ENCODE measurements at regions of chr19 and their contacts with region 1.

Region 1: GRCh38 chr19:45469132-45469944 is 1.5 kb downstream of the FOSB start:
- DNase-seq: peak; percentile 98
- H3K4me3 Mint-ChIP-seq: peak overlapping the region; percentile 86
- H3K27ac Mint-ChIP-seq: peak overlapping the region; percentile 99
- H3K4me1 Mint-ChIP-seq: peaks cover 35% of the 10 kb centered on the region
- H3K27me3 Mint-ChIP-seq: peaks cover 23% of the 10 kb centered on the region
- CTCF ChIP-seq: no peak

Region 2: GRCh38 chr19:45391340-45391739 is 78.0 kb before region 1 on chr19:
- CTCF ChIA-PET with region 1: no interaction called
- intact Hi-C with region 1: no loop called
- DNase-seq: no peak
- H3K4me3 Mint-ChIP-seq: no peak overlapping the region
- H3K27ac Mint-ChIP-seq: peak overlapping the region; percentile 27
- H3K4me1 Mint-ChIP-seq: no peaks in the 10 kb centered on the region
- H3K27me3 Mint-ChIP-seq: no peaks in the 10 kb centered on the region
- CTCF ChIP-seq: no peak

Region 3: DNA sequence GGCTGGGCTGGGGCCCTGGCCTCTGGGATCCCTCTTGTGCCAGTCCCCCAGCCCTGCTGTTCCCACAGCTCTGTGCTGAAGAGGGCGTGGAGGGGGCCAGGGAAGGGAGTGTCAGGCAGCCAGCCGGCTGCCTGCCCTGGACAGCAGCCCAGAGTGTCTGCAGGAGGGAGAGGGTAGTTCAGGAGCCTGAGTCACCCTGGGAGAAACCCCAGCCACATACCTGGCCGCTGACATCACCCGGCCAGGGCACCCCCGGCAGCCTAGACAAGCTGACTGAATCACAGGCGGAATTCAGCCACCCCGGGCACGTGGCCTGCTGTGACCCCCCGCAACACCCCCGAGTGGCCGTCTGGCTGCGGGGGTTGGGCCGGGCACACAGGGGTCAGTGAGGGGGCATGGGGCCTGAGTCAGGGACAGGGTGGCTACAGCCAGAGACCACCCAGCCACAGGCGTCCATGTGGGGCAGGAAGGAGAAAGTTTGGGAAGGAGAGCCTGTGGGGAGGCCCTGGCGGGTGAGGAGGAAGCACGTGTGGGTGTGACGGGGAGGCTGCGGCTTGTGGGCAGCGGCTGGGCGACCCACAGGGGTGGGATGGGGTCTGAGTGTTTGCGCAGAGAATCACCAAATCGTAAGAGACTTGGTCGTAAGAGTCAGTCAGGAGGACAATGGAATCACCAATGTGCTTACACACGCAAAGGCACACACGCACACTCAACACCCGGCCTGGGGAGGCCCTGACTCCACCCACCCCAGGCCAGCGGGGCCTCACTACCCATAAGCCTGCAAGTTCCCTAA is 13.4 kb before region 1 on chr19:
- CTCF ChIA-PET with region 1: interaction called, 13 read pairs
- intact Hi-C with region 1: loop called (anchors 2 kb)
- DNase-seq: peak; percentile 99
- H3K4me3 Mint-ChIP-seq: peak overlapping the region; percentile 70
- H3K27ac Mint-ChIP-seq: peak overlapping the region; percentile 93
- H3K4me1 Mint-ChIP-seq: peaks cover 68% of the 10 kb centered on the region
- H3K27me3 Mint-ChIP-seq: no peaks in the 10 kb centered on the region
- CTCF ChIP-seq: no peak

Region 4: DNA sequence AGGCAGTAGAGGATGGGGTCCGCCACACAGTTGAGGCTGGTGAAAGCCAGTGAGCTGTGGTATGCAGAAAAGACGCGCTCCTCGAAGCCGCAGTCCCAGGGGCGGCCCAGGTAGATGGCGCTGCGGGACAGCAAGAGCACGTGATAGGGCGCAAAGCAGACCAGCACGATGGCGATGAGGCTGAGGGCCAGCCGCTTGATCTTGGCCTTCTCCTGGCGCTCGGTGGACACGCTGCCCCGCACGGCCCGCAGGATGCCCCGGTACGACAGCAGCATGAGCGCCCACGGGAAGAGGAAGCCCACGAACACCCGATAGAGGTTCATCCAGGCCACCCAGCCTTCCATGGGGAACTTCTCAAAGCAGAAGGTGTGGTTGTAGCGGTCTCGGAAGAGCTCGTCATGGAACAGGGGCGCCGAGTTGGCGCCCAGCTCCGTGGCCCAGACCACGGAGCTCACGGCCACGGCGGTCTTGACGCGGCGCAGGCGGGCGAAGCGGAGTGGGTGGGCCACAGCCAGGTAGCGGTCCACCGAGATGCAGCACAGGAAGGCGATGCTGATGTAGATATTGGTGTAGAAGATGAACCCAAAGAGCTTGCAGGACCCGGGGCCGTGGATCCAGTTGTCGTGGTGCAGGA is 121.8 kb after region 1 on chr19:
- CTCF ChIA-PET with region 1: no interaction called
- intact Hi-C with region 1: no loop called
- DNase-seq: peak; percentile 62
- H3K4me3 Mint-ChIP-seq: no peak overlapping the region
- H3K27ac Mint-ChIP-seq: no peak overlapping the region
- H3K4me1 Mint-ChIP-seq: peaks cover 6% of the 10 kb centered on the region
- H3K27me3 Mint-ChIP-seq: peaks cover 22% of the 10 kb centered on the region
- CTCF ChIP-seq: peak; percentile 34

Measured in Calu3 (cell line).